Activated T-helper 2 cell treated with anti-CD3 and anti-CD28 coated beads, Interferon-gamma antibody, Interleukin-2, Interleukin-4, amounts not matched to agents 10 μg/mL and 5 μg/mL and 100 μg/mL, durations not matched to agents 14 hours and 24 hours and 36 hours (primary cell): ENCODE measurements at regions of chr1 and their contacts with region 1.

Region 1: DNA sequence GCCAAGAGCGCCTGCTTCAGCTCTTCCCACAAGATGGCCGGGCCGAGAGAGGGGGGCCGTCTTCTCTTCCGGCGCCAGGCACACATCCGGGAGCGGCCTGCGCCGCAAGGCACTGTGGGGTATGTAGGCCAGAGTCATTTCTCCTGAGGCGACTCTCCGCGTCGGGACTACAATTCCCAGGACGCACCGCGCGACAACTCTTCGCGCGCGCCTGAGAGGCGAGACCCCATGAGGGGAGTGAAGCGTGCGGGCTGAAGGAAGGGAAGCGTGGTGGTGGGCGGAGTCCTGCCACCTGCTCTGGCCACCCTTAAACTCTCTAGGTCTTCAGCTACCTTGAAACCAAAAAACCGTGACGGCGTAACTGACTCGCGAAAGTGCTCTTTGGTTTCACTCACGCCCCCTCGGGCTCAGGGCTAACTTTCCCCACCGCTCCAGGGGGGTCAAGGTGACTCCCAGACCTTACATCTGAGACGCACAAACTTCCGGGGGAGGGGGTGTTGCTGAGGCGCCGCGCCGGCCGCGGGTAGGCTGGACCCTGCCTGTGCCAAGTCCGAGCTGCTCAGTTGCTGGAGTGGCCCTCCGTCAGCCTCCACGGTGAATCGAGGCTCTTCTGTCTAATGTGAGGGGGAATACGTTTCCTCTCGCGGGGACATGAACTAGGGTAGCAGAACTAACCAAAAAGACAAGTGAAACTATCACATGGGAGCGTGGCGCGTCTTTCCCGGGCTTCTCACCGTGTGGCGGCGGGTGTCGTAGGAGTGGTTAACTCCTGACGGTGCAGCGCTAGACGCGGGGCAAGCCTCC is at the start of gene SERBP1:
- DNase-seq: peak; percentile 95
- H3K4me3 Mint-ChIP-seq: peak within 1 kb of the TSS; percentile 87
- H3K27ac Mint-ChIP-seq: peak within 1 kb of the TSS; percentile 95
- H3K4me1 Mint-ChIP-seq: peaks cover 48% of the 10 kb centered on the region
- H3K27me3 Mint-ChIP-seq: no peaks in the 10 kb centered on the region
- total RNA-seq, gene SERBP1: 484 and 491 TPM in 2 replicates

Region 2: GRCh38 chr1:67230539-67230938 is 200.0 kb before region 1 on chr1:
- intact Hi-C with region 1: loop called (anchors 10 kb)
- DNase-seq: no peak
- H3K4me3 Mint-ChIP-seq: no peak overlapping the region
- H3K27ac Mint-ChIP-seq: no peak overlapping the region
- H3K4me1 Mint-ChIP-seq: peaks cover 6% of the 10 kb centered on the region
- H3K27me3 Mint-ChIP-seq: no peaks in the 10 kb centered on the region

Region 3: DNA sequence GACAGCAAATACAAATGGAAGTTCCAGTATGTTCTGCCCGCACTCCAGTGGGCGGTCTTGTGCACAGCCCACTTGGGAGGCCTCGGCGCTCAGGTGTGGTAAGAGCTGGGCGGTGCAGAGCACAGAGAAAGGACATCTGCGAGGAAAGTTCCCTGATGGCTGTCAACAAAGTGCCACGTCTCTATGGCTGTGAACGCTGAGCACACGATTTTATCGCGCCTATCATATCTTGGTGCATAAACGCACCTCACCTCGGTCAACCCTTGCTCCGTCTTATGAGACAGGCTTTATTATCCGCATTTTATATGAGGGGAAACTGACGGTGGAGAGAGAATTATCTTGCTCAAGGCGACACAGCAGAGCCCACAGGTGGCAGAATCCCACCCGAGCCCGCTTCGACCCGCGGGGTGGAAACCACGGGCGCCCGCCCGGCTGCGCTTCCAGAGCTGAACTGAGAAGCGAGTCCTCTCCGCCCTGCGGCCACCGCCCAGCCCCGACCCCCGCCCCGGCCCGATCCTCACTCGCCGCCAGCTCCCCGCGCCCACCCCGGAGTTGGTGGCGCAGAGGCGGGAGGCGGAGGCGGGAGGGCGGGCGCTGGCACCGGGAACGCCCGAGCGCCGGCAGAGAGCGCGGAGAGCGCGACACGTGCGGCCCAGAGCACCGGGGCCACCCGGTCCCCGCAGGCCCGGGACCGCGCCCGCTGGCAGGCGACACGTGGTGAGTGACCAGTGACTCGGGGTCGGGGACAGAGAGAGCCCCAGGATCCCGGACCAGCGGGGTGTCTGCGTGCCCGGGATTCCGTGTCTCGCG is 123.1 kb before region 1 on chr1 and contains the start of gene IL12RB2:
- intact Hi-C with region 1: no loop called
- DNase-seq: peak; percentile 57
- H3K4me3 Mint-ChIP-seq: peak within 1 kb of the TSS; percentile 94
- H3K27ac Mint-ChIP-seq: peak within 1 kb of the TSS; percentile 95
- H3K4me1 Mint-ChIP-seq: peaks cover 69% of the 10 kb centered on the region
- H3K27me3 Mint-ChIP-seq: no peaks in the 10 kb centered on the region
- total RNA-seq, gene IL12RB2: 108 TPM in 2 replicates

Region 4: DNA sequence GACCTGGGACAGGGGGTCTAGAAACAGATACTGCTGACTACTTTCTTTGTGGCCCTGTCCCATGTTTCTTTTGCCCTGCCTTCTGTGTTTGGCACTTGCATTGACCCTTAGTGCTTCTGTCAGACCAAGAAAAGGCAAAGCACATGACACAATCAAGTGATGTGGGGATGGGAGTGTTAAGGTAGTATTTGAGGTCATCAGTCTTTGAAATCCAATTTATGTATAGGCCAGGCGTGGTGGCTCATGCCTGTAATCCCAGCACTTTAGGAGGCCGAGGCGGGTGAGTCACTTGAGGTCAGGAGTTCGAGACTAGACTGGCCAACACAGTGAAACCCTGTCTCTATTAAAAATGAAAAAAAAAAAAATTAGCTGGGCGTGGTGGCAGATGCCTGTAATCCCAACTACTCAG is 26.3 kb before region 1 on chr1:
- intact Hi-C with region 1: loop called (anchors 2 kb)
- DNase-seq: no peak
- H3K4me3 Mint-ChIP-seq: no peak overlapping the region
- H3K27ac Mint-ChIP-seq: peak overlapping the region; percentile 33
- H3K4me1 Mint-ChIP-seq: peaks cover 4% of the 10 kb centered on the region
- H3K27me3 Mint-ChIP-seq: no peaks in the 10 kb centered on the region